ENCODE measurements at regions of chr1 and their contacts with region 1.

Region 1: GRCh38 chr1:3491291-3492246 is 37.1 kb downstream of the ARHGEF16 start:
- DNase-seq: no peak
- H3K4me3 ChIP-seq: no peak overlapping the region
- H3K27ac ChIP-seq: no peak overlapping the region
- H3K4me1 ChIP-seq: peaks cover 7 to 25% (median 9%) of the 10 kb centered on the region in 3 donors
- H3K27me3 ChIP-seq: no peaks in the 10 kb centered on the region
- CTCF ChIP-seq: peak; percentile 97 to 100 (median 98)
- POLR2A ChIP-seq: no peak

Region 2: DNA sequence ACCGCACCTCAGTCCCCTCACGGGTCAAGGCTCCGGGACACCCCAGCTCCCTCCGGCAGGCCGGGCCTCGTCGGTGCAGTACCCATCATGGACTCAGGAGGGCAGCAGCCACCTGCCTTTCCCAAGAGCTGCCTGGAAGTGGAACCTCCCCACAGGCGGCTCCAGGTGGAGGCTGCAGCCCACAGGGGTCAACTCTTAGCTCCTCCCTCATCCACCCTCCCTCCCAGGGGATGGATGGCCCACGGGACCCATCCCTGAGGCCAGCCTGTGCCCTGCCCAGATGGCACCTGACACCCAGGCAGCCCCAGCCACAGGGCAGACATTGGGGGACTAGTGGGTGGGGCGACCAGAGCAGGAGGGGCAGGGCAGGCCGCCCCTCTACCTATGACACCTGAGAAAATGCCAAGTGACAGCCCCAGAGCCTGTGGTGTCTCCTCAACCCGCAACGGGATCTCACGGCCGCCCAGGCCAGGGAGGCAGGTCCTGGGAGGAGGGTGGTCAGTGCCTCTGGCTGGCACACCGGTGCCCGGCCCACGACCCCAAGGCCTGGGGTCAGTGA is 38.3 kb before region 1 on chr1:
- intact Hi-C with region 1: no loop called
- DNase-seq: no peak
- H3K4me3 ChIP-seq: no peak overlapping the region
- H3K27ac ChIP-seq: peak overlapping the region in 3 of 4 donors; percentile 72 to 85 (median 82)
- H3K4me1 ChIP-seq: peaks cover 27 to 56% (median 36%) of the 10 kb centered on the region in 3 donors
- H3K27me3 ChIP-seq: peaks cover 0 to 72% (median 2%) of the 10 kb centered on the region in 4 donors
- CTCF ChIP-seq: peak; percentile 89 to 98 (median 93)
- POLR2A ChIP-seq: no peak

Region 3: DNA sequence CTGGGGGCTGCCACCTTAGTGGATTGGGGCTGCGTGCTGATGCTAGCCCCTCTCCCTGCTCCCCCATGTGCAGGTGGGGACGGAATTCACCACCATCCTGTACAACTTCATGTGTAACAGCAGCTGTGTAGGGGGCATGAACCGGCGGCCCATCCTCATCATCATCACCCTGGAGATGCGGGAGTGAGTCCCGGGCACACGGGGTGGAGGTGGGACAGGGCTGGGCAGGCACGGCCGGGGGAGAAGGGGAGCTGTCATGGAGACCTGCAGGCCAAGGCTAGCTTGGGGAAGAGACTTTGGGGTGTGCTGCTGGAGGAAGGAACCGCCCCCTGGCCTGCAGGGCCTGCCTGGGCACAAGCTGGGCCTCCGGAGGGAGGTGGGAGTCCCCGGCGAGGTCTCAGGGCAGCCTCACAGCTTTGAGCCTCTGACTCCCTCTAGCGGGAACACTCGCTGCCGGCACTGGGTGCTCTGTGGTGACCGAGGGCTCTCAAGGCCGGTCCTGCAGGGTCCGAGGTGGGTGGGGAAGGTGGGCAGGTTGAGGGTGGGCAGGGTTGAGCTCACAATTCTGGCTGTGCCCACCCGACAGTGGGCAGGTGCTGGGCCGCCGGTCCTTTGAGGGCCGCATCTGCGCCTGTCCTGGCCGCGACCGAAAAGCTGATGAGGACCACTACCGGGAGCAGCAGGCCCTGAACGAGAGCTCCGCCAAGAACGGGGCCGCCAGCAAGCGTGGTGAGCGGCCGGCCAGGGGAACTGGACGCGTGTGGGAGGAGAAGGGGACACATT is 235.7 kb after region 1 on chr1:
- intact Hi-C with region 1: loop called (anchors 10 kb)
- DNase-seq: no peak
- H3K4me3 ChIP-seq: no peak overlapping the region
- H3K27ac ChIP-seq: no peak overlapping the region
- H3K4me1 ChIP-seq: no peaks in the 10 kb centered on the region
- H3K27me3 ChIP-seq: peaks cover 0 to 64% (median 0%) of the 10 kb centered on the region in 4 donors
- CTCF ChIP-seq: peak in 2 of 6 experiments; percentile 7 to 12
- POLR2A ChIP-seq: no peak

Region 4: GRCh38 chr1:4006676-4007374 is 515.3 kb after region 1 on chr1:
- intact Hi-C with region 1: no loop called
- DNase-seq: no peak
- H3K4me3 ChIP-seq: no peak overlapping the region
- H3K27ac ChIP-seq: no peak overlapping the region
- H3K4me1 ChIP-seq: no peaks in the 10 kb centered on the region
- H3K27me3 ChIP-seq: peaks cover 0 to 9% (median 0%) of the 10 kb centered on the region in 4 donors
- CTCF ChIP-seq: no peak
- POLR2A ChIP-seq: no peak

Measured in esophagus squamous epithelium (tissue), 5 donors.